CD4-positive, alpha-beta memory T cell (primary cell): ENCODE measurements at regions of chr12 and their contacts with region 1.

Region 1: GRCh38 chr12:95072900-95073697 is at the start of gene NR2C1:
- DNase-seq: peak; percentile 92 to 95 (median 94)
- H3K4me3 ChIP-seq: peak within 1 kb of the TSS; percentile 88 to 89
- H3K4me3 Mint-ChIP-seq: peak within 1 kb of the TSS; percentile 93 to 99 (median 95)
- H3K27ac ChIP-seq: peak within 1 kb of the TSS; percentile 76
- H3K27ac Mint-ChIP-seq: peak within 1 kb of the TSS; percentile 84 to 98 (median 96)
- H3K4me1 ChIP-seq: peaks cover 22% of the 10 kb centered on the region
- H3K4me1 Mint-ChIP-seq: peaks cover 14 to 39% (median 20%) of the 10 kb centered on the region in 4 donors
- H3K27me3 ChIP-seq: no peaks in the 10 kb centered on the region
- H3K27me3 Mint-ChIP-seq: no peaks in the 10 kb centered on the region
- total RNA-seq, gene NR2C1: 45.4 to 55.4 TPM

Region 2: DNA sequence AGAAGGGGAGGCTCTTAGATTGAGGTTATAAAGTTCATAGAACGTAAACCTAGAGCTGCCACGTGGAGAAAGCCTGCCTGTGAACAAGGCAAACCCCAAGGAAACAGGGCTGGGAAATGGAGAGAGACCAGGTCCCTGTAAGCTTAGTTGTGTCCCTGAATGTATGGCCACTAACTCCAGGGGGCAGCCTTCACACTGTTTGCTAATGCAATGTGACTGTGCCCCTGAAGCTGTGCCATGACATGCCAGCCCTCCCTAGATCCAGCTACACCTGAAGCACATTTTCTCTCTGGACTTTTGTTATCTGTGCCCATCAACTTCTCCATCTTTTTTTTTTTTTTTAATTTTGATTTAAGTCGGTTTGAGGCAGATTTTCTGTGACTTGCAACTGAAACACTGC is 362.2 kb before region 1 on chr12:
- CTCF ChIA-PET with region 1: interaction called, 4 read pairs
- POLR2A ChIA-PET with region 1: no interaction called
- intact Hi-C with region 1: loop called (anchors 2 kb)
- DNase-seq: peak in 1 of 5 donors; percentile 1
- H3K4me3 ChIP-seq: no peak overlapping the region
- H3K4me3 Mint-ChIP-seq: no peak overlapping the region
- H3K27ac ChIP-seq: no peak overlapping the region
- H3K27ac Mint-ChIP-seq: no peak overlapping the region
- H3K4me1 ChIP-seq: no peaks in the 10 kb centered on the region
- H3K4me1 Mint-ChIP-seq: no peaks in the 10 kb centered on the region
- H3K27me3 ChIP-seq: no peaks in the 10 kb centered on the region
- H3K27me3 Mint-ChIP-seq: peaks cover 2 to 6% of the 10 kb centered on the region in 2 donors

Region 3: GRCh38 chr12:94925729-94926128 is 147.4 kb before region 1 on chr12:
- CTCF ChIA-PET with region 1: no interaction called
- POLR2A ChIA-PET with region 1: no interaction called
- intact Hi-C with region 1: loop called (anchors 1 kb)
- DNase-seq: no peak
- H3K4me3 ChIP-seq: no peak overlapping the region
- H3K4me3 Mint-ChIP-seq: peak overlapping the region in 1 of 8 donors; percentile 15
- H3K27ac ChIP-seq: no peak overlapping the region
- H3K27ac Mint-ChIP-seq: no peak overlapping the region
- H3K4me1 ChIP-seq: no peaks in the 10 kb centered on the region
- H3K4me1 Mint-ChIP-seq: peaks cover 0 to 4% (median 0%) of the 10 kb centered on the region in 4 donors
- H3K27me3 ChIP-seq: no peaks in the 10 kb centered on the region
- H3K27me3 Mint-ChIP-seq: peaks cover 0 to 2% of the 10 kb centered on the region in 2 donors

Region 4: GRCh38 chr12:94987801-94988200 is 85.3 kb before region 1 on chr12:
- CTCF ChIA-PET with region 1: interaction called, 18 read pairs
- POLR2A ChIA-PET with region 1: interaction called, 10 read pairs
- intact Hi-C with region 1: no loop called
- DNase-seq: peak in 4 of 5 donors; percentile 49 to 64 (median 60)
- H3K4me3 ChIP-seq: no peak overlapping the region
- H3K4me3 Mint-ChIP-seq: peak overlapping the region; percentile 16 to 80 (median 72)
- H3K27ac ChIP-seq: peak overlapping the region; percentile 35
- H3K27ac Mint-ChIP-seq: peak overlapping the region; percentile 73 to 95 (median 92)
- H3K4me1 ChIP-seq: peaks cover 65% of the 10 kb centered on the region
- H3K4me1 Mint-ChIP-seq: peaks cover 43 to 69% (median 57%) of the 10 kb centered on the region in 4 donors
- H3K27me3 ChIP-seq: no peaks in the 10 kb centered on the region
- H3K27me3 Mint-ChIP-seq: no peaks in the 10 kb centered on the region

Region 5: DNA sequence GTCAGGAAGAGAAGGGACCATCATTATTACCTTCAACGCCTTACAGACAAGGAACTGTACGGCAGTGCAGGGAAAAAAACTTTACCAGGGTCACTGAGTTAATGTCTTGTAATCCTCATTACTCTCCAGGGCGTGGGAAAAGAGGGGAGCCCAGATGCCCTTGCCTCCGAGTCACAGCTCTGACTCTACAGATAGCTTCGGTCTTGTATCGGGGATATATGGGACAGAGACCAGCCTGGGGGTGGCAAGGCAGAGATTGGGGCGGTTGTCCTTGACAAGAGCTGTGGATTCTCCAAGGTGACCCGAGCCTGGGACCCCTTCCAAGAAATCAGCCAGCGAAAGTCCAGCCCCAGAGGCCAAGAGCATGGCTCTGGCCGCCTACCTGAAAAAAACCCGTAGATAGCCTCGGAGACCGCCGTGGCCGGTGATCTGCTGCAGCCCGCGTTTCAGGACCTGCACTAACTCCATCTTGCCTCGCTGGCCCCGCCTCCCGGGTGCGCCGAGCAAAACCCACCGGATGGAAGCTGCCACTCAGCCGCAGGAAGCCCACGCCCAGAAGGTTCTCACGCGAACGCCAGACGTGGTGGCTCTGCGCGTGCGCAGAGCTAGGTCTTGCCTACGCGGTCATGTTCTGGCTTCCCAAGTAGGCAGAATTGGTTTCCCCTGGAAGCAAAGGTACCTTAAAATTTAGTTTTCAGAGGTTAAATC is 69.7 kb before region 1 on chr12 and contains the start of gene NDUFA12:
- CTCF ChIA-PET with region 1: interaction called, 10 read pairs
- POLR2A ChIA-PET with region 1: interaction called, 31 read pairs
- intact Hi-C with region 1: loop called (anchors 1 kb)
- DNase-seq: peak; percentile 92 to 94 (median 93)
- H3K4me3 ChIP-seq: peak within 1 kb of the TSS; percentile 83 to 96
- H3K4me3 Mint-ChIP-seq: peak within 1 kb of the TSS; percentile 93 to 99 (median 95)
- H3K27ac ChIP-seq: peak within 1 kb of the TSS; percentile 80
- H3K27ac Mint-ChIP-seq: peak within 1 kb of the TSS; percentile 92 to 97 (median 96)
- H3K4me1 ChIP-seq: peaks cover 61% of the 10 kb centered on the region
- H3K4me1 Mint-ChIP-seq: peaks cover 32 to 55% (median 42%) of the 10 kb centered on the region in 4 donors
- H3K27me3 ChIP-seq: no peaks in the 10 kb centered on the region
- H3K27me3 Mint-ChIP-seq: no peaks in the 10 kb centered on the region
- total RNA-seq, gene NDUFA12: 55.5 to 61.5 TPM

Region 6: GRCh38 chr12:95083938-95084337 is 10.8 kb after region 1 on chr12:
- CTCF ChIA-PET with region 1: interaction called, 14 read pairs
- POLR2A ChIA-PET with region 1: interaction called, 3 read pairs
- intact Hi-C with region 1: no loop called
- DNase-seq: no peak
- H3K4me3 ChIP-seq: no peak overlapping the region
- H3K4me3 Mint-ChIP-seq: no peak overlapping the region
- H3K27ac ChIP-seq: no peak overlapping the region
- H3K27ac Mint-ChIP-seq: no peak overlapping the region
- H3K4me1 ChIP-seq: no peaks in the 10 kb centered on the region
- H3K4me1 Mint-ChIP-seq: peaks cover 0 to 2% (median under 1%) of the 10 kb centered on the region in 4 donors
- H3K27me3 ChIP-seq: no peaks in the 10 kb centered on the region
- H3K27me3 Mint-ChIP-seq: no peaks in the 10 kb centered on the region

Region 7: GRCh38 chr12:95248604-95249360 is 175.7 kb after region 1 on chr12:
- CTCF ChIA-PET with region 1: no interaction called
- POLR2A ChIA-PET with region 1: no interaction called
- intact Hi-C with region 1: no loop called
- DNase-seq: no peak
- H3K4me3 ChIP-seq: no peak overlapping the region
- H3K4me3 Mint-ChIP-seq: no peak overlapping the region
- H3K27ac ChIP-seq: no peak overlapping the region
- H3K27ac Mint-ChIP-seq: peak overlapping the region in 2 of 7 donors; percentile 25 to 32
- H3K4me1 ChIP-seq: no peaks in the 10 kb centered on the region
- H3K4me1 Mint-ChIP-seq: peaks cover 17 to 33% (median 22%) of the 10 kb centered on the region in 4 donors
- H3K27me3 ChIP-seq: no peaks in the 10 kb centered on the region
- H3K27me3 Mint-ChIP-seq: no peaks in the 10 kb centered on the region

Region 8: DNA sequence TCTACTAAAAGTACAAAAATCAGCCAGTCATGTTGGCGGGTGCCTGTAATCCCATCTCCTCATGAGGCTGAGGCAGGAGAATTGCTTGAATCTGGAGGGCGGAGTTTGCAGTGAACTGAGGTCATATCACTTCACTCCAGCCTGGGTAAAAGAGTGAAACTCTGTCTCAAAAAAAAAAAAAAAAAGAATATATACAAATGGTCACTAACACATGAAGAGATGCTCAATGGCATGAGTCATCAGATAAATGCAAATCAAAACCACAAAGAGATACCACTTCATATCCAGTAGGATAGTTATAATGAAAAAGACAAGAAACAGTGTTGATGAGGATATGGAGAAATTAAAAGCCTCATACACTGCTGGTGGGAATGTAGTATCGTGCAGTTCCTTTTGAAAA is 367.3 kb after region 1 on chr12:
- CTCF ChIA-PET with region 1: no interaction called
- POLR2A ChIA-PET with region 1: no interaction called
- intact Hi-C with region 1: no loop called
- DNase-seq: no peak
- H3K4me3 ChIP-seq: no peak overlapping the region
- H3K4me3 Mint-ChIP-seq: no peak overlapping the region
- H3K27ac ChIP-seq: no peak overlapping the region
- H3K27ac Mint-ChIP-seq: no peak overlapping the region
- H3K4me1 ChIP-seq: no peaks in the 10 kb centered on the region
- H3K4me1 Mint-ChIP-seq: no peaks in the 10 kb centered on the region
- H3K27me3 ChIP-seq: no peaks in the 10 kb centered on the region
- H3K27me3 Mint-ChIP-seq: peaks cover 0 to 2% of the 10 kb centered on the region in 2 donors

Region 9: DNA sequence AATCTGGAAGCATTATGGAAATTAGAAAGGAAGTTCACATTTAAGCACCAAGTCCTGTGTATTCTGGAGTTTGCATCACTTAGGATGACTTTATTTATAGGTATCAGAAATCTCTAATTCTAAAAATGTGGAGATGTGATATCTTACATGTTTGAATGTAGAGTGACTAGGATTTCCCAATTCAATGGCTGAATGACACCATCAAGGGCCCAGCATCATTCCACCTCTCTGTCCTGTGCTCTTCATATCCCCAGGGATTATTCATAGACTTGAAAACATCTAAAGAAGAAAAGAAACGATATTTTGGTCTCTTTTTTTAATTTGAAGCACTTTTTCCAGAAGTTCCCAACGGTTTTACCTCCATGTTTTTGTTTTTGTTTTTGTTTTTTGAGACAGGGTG is 385.7 kb after region 1 on chr12:
- CTCF ChIA-PET with region 1: no interaction called
- POLR2A ChIA-PET with region 1: no interaction called
- intact Hi-C with region 1: no loop called
- DNase-seq: no peak
- H3K4me3 ChIP-seq: no peak overlapping the region
- H3K4me3 Mint-ChIP-seq: no peak overlapping the region
- H3K27ac ChIP-seq: no peak overlapping the region
- H3K27ac Mint-ChIP-seq: no peak overlapping the region
- H3K4me1 ChIP-seq: no peaks in the 10 kb centered on the region
- H3K4me1 Mint-ChIP-seq: no peaks in the 10 kb centered on the region
- H3K27me3 ChIP-seq: no peaks in the 10 kb centered on the region
- H3K27me3 Mint-ChIP-seq: peaks cover 1 to 4% of the 10 kb centered on the region in 2 donors

Region 10: DNA sequence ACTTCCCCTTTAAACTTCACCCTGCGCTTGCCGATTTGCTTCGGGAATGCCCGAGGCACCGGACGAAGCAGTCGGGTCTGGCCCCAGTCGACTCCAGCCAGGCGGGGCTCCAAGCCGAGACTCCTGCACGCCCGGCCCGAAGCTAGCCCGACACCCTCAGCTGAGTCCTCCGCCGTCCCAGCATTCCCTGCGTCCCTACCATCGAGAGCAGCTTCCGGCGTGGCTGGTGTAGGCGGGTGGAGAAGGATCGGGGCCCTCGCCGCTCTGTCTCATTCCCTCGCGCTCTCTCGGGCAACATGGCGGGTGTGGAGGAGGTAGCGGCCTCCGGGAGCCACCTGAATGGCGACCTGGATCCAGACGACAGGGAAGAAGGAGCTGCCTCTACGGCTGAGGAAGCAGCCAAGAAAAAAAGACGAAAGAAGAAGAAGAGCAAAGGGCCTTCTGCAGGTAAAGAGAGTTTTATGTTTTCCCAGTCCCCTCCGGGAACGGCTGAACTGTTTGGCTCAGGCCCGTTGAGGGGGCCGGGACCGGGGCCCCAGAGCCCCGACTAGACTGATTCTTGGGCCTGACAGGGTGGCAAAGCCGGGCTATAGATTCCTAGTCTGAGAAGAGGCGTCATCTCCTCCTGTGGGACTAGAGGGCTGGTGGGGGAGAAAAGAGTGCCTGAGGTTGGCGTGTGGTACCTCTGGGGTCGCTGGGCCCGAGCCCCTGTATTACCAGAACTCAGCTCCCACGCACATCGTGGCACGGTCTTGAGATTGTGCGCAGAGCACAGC is 401.0 kb after region 1 on chr12 and contains the start of gene METAP2:
- CTCF ChIA-PET with region 1: interaction called, 5 read pairs
- POLR2A ChIA-PET with region 1: interaction called, 31 read pairs
- intact Hi-C with region 1: loop called (anchors 1 kb)
- DNase-seq: peak; percentile 87 to 92 (median 88)
- H3K4me3 ChIP-seq: peak within 1 kb of the TSS; percentile 83 to 99
- H3K4me3 Mint-ChIP-seq: peak within 1 kb of the TSS; percentile 99 to 100 (median 100)
- H3K27ac ChIP-seq: peak within 1 kb of the TSS; percentile 78
- H3K27ac Mint-ChIP-seq: peak within 1 kb of the TSS; percentile 90 to 100 (median 98)
- H3K4me1 ChIP-seq: peaks cover 50% of the 10 kb centered on the region
- H3K4me1 Mint-ChIP-seq: peaks cover 36 to 64% (median 54%) of the 10 kb centered on the region in 4 donors
- H3K27me3 ChIP-seq: no peaks in the 10 kb centered on the region
- H3K27me3 Mint-ChIP-seq: no peaks in the 10 kb centered on the region
- total RNA-seq, gene METAP2: 50.7 to 52.7 TPM